B cell (primary cell): ENCODE measurements at regions of chr10 and their contacts with region 1.

Region 1: GRCh38 chr10:43574001-43574892 is at the start of gene ZNF239:
- DNase-seq: peak; percentile 88
- ATAC-seq: peak; percentile 95
- H3K4me3 ChIP-seq: peak within 1 kb of the TSS; percentile 42 to 72 (median 60)
- H3K4me3 Mint-ChIP-seq: peak within 1 kb of the TSS; percentile 93
- H3K27ac ChIP-seq: peak within 1 kb of the TSS; percentile 40 to 67
- H3K27ac Mint-ChIP-seq: peak within 1 kb of the TSS; percentile 94
- H3K4me1 ChIP-seq: peaks cover 17 to 27% of the 10 kb centered on the region in 2 donors
- H3K4me1 Mint-ChIP-seq: peaks cover 43% of the 10 kb centered on the region
- H3K27me3 ChIP-seq: no peaks in the 10 kb centered on the region
- H3K27me3 Mint-ChIP-seq: no peaks in the 10 kb centered on the region
- CTCF ChIP-seq: no peak
- total RNA-seq, gene ZNF239: 5.9 and 7.6 TPM in 2 replicates

Region 2: DNA sequence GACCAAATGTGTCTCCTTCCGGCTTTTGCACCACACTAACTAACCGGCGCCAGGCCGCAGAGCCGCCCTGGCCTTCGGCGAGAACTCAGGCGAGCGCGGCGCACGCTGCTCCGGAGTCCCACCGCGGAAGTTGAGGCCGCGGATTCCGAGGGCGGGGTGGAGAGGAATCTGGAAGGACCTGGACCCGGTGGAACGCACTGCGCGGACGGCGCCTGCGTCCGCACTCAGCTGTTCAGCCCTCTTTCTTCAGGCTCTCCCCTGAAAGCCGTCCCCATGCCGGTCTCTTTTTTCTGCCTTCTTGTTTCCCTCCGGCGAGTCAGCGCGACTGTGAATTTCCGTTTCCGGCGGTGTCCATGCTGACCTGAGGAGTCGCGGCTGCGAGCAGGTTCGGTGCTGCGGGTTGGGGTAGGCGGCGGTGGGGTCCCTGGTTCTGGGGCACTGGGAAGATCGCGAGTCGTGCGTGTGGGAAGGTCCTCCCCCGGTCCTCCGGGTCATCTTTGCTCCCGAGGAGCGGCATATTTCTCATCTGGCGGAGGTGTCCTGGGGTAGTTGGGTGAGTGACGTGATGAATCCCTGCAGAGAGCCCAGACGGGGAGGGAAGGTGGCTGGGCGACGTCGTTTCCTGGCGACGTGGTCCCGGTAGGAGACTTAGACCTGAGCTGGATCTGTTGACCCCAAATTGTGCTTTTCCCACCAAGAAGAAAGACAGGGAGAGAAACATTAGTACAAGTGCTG is 791.6 kb before region 1 on chr10 and contains the start of gene BMS1:
- CTCF ChIA-PET with region 1: no interaction called
- POLR2A ChIA-PET with region 1: no interaction called
- intact Hi-C with region 1: loop called (anchors 10 kb)
- DNase-seq: peak; percentile 92
- ATAC-seq: peak; percentile 86
- H3K4me3 ChIP-seq: peak within 1 kb of the TSS; percentile 70 to 93 (median 85)
- H3K4me3 Mint-ChIP-seq: peak within 1 kb of the TSS; percentile 96
- H3K27ac ChIP-seq: peak within 1 kb of the TSS; percentile 77 to 81
- H3K27ac Mint-ChIP-seq: peak within 1 kb of the TSS; percentile 89
- H3K4me1 ChIP-seq: peaks cover 12 to 13% of the 10 kb centered on the region in 2 donors
- H3K4me1 Mint-ChIP-seq: peaks cover 24% of the 10 kb centered on the region
- H3K27me3 ChIP-seq: no peaks in the 10 kb centered on the region
- H3K27me3 Mint-ChIP-seq: peaks cover 6% of the 10 kb centered on the region
- CTCF ChIP-seq: no peak
- total RNA-seq, gene BMS1: 17.1 and 17.5 TPM in 2 replicates

Region 3: DNA sequence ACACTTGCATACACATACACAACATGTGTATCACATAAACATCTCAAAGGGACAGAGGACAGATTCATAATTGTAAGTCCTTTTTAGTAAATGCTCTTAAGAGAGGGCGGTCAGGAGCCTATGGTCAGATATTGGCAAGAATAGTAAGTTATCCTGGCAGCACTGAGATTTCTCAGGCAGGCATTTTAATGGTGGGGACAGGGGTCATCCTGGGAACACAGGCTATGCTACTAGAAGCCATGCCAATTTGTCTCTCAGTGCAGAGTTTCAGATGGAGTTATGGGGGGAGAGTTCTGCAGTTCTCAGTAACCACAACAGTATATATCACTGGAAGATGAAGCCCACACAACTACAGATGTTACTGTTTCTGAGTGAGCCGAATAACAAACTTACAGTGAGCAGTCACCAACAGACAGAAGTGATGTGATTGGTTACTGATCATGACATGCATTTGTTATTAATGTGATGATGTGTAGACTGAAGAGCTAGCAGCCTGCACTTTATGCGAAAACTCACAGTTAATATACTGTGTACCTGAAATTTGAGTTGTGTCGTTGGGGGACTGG is 120.9 kb before region 1 on chr10:
- CTCF ChIA-PET with region 1: no interaction called
- POLR2A ChIA-PET with region 1: no interaction called
- intact Hi-C with region 1: loop called (anchors 5 kb)
- DNase-seq: no peak
- ATAC-seq: no peak
- H3K4me3 ChIP-seq: no peak overlapping the region
- H3K4me3 Mint-ChIP-seq: peak overlapping the region; percentile 83
- H3K27ac ChIP-seq: peak overlapping the region; percentile 85 to 90
- H3K27ac Mint-ChIP-seq: peak overlapping the region; percentile 98
- H3K4me1 ChIP-seq: peaks cover 47 to 71% of the 10 kb centered on the region in 2 donors
- H3K4me1 Mint-ChIP-seq: peaks cover 48% of the 10 kb centered on the region
- H3K27me3 ChIP-seq: no peaks in the 10 kb centered on the region
- H3K27me3 Mint-ChIP-seq: no peaks in the 10 kb centered on the region
- CTCF ChIP-seq: no peak

Region 4: DNA sequence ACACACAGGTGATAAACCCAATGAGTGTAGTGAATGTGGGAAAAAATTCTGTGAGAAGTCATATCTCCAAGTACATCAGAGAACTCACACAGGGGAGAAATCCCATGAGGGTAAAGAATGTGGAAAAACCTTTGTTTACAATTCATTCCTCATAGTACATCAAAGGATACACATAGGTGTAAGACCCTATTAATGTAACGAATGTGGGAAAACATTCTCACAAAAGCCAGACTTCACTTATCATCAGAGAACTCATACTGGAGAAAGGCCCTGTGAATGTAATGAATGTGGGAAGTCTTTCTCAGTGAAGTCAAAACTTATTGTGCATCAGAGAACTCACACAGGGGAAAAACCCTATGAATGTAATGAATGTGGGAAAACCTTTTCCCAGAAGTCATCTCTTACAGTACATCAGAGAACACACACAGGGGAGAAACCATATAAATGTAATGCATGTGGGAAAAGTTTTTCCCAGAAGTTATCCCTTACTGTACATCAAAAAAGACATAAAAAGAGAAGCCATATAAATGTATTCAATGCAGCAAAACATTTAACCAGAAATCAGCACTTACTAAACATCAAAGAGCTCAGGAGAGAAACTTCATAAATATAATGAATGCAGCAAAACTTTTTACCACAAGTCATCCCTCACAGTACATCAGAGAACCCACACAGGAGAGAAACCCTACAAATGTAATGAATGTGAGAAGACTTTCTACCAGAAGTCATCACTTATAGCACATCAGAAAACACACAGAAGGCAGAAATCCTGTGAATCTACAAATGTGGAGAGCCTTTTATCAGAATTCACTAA is 49.6 kb before region 1 on chr10:
- CTCF ChIA-PET with region 1: no interaction called
- POLR2A ChIA-PET with region 1: no interaction called
- intact Hi-C with region 1: no loop called
- DNase-seq: no peak
- ATAC-seq: no peak
- H3K4me3 ChIP-seq: no peak overlapping the region
- H3K4me3 Mint-ChIP-seq: no peak overlapping the region
- H3K27ac ChIP-seq: no peak overlapping the region
- H3K27ac Mint-ChIP-seq: no peak overlapping the region
- H3K4me1 ChIP-seq: no peaks in the 10 kb centered on the region
- H3K4me1 Mint-ChIP-seq: no peaks in the 10 kb centered on the region
- H3K27me3 ChIP-seq: no peaks in the 10 kb centered on the region
- H3K27me3 Mint-ChIP-seq: peaks cover 4% of the 10 kb centered on the region
- CTCF ChIP-seq: no peak

Region 5: GRCh38 chr10:43585046-43585445 is 10.8 kb after region 1 on chr10:
- CTCF ChIA-PET with region 1: no interaction called
- POLR2A ChIA-PET with region 1: no interaction called
- intact Hi-C with region 1: no loop called
- DNase-seq: no peak
- ATAC-seq: no peak
- H3K4me3 ChIP-seq: no peak overlapping the region
- H3K4me3 Mint-ChIP-seq: no peak overlapping the region
- H3K27ac ChIP-seq: no peak overlapping the region
- H3K27ac Mint-ChIP-seq: no peak overlapping the region
- H3K4me1 ChIP-seq: no peaks in the 10 kb centered on the region
- H3K4me1 Mint-ChIP-seq: no peaks in the 10 kb centered on the region
- H3K27me3 ChIP-seq: peaks cover 0 to 8% (median 0%) of the 10 kb centered on the region in 4 experiments
- H3K27me3 Mint-ChIP-seq: peaks cover 21% of the 10 kb centered on the region
- CTCF ChIP-seq: no peak

Region 6: GRCh38 chr10:43594944-43595589 is 20.8 kb after region 1 on chr10:
- CTCF ChIA-PET with region 1: interaction called, 5 read pairs
- POLR2A ChIA-PET with region 1: no interaction called
- intact Hi-C with region 1: loop called (anchors 1 kb)
- DNase-seq: peak; percentile 63
- ATAC-seq: peak; percentile 76
- H3K4me3 ChIP-seq: peak overlapping the region; percentile 34 to 58 (median 51)
- H3K4me3 Mint-ChIP-seq: peak overlapping the region; percentile 93
- H3K27ac ChIP-seq: peak overlapping the region; percentile 9 to 15
- H3K27ac Mint-ChIP-seq: peak overlapping the region; percentile 92
- H3K4me1 ChIP-seq: peaks cover 14 to 20% of the 10 kb centered on the region in 2 donors
- H3K4me1 Mint-ChIP-seq: peaks cover 26% of the 10 kb centered on the region
- H3K27me3 ChIP-seq: peaks cover 0 to 5% (median 0%) of the 10 kb centered on the region in 4 experiments
- H3K27me3 Mint-ChIP-seq: peaks cover 7% of the 10 kb centered on the region
- CTCF ChIP-seq: no peak

Region 7: GRCh38 chr10:43606322-43607198 is 32.3 kb after region 1 on chr10 and contains the start of gene ZNF485:
- CTCF ChIA-PET with region 1: interaction called, 5 read pairs
- POLR2A ChIA-PET with region 1: no interaction called
- intact Hi-C with region 1: loop called (anchors 1 kb)
- DNase-seq: peak; percentile 71
- ATAC-seq: peak; percentile 95
- H3K4me3 ChIP-seq: peak within 1 kb of the TSS; percentile 49 to 86 (median 71)
- H3K4me3 Mint-ChIP-seq: peak within 1 kb of the TSS; percentile 78
- H3K27ac ChIP-seq: peak within 1 kb of the TSS in 1 of 2 donors; percentile 56
- H3K27ac Mint-ChIP-seq: peak within 1 kb of the TSS; percentile 72
- H3K4me1 ChIP-seq: peaks cover 10% of the 10 kb centered on the region in 2 donors
- H3K4me1 Mint-ChIP-seq: peaks cover 18% of the 10 kb centered on the region
- H3K27me3 ChIP-seq: no peaks in the 10 kb centered on the region
- H3K27me3 Mint-ChIP-seq: peaks cover 4% of the 10 kb centered on the region
- CTCF ChIP-seq: no peak
- total RNA-seq, gene ZNF485: 8.4 and 9.5 TPM in 2 replicates